PC-9 (cell line): ENCODE measurements at regions of chr7 and their contacts with region 1.

Region 1: DNA sequence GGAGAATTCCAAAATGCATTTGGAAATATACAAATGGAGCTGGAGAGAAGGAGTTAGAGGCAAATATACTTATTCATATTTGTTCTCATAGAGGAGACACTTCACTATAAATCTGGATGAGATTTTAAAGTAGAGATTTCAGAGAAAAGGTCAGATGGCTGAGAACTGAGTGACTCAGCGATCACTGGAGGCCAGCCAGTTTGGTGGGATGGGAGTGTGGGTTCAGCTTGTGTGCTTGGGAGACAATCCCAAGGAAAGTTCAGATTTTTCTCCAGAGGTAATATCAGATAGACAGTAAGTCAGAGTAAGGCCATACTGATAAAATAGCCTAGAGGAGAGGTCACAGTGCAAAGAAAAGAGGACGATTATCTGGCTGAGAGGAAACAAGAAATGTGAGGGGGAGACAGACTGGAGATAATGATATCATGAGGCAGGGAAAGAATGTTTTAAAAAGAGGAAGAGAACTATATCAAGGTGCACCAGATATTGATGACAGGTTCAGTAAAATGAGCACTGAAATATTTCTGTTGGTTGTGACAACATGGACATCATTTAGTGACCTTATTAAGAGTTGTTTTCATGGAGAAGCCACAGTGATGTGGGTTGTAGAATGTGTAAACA is 67.0 kb downstream of the MDFIC start:
- DNase-seq: peak in 1 of 2 experiments; percentile 61
- H3K4me3 ChIP-seq: no peak overlapping the region
- H3K27ac ChIP-seq: peak overlapping the region; percentile 40
- H3K4me1 ChIP-seq: peaks cover 16% of the 10 kb centered on the region
- H3K27me3 ChIP-seq: no peaks in the 10 kb centered on the region
- CTCF ChIP-seq: no peak

Region 2: DNA sequence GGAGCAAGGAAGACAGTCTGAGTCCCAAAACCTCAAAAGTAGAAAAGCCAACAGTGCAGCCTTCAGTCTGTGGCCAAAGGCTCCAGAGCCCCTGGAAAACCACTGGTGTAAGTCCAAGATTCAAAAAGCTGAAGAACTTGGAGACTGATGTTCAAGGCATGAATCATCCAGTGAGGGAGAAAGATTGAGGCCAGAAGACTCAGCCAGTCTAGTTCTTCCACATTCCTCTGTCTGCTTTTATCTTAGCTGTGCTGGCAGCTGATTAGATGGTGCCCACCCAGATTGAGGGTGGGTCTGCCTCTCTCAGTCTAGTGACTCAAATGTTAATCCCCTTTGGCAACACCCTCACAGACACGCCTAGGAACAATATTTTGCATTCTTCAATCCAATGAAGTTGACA is 87.1 kb before region 1 on chr7:
- CTCF ChIA-PET with region 1: no interaction called
- POLR2A ChIA-PET with region 1: no interaction called
- intact Hi-C with region 1: loop called (anchors 5 kb)
- DNase-seq: peak; percentile 79 to 88
- H3K4me3 ChIP-seq: 0 out of 2 replicates have a peak overlapping the region, but pooled peaks have one; percentile 12
- H3K27ac ChIP-seq: peak overlapping the region; percentile 22
- H3K4me1 ChIP-seq: peaks cover 17% of the 10 kb centered on the region
- H3K27me3 ChIP-seq: no peaks in the 10 kb centered on the region
- CTCF ChIP-seq: no peak

Region 3: GRCh38 chr7:114922016-114922651 is 66.7 kb before region 1 on chr7 and contains the start of gene MDFIC:
- CTCF ChIA-PET with region 1: no interaction called
- POLR2A ChIA-PET with region 1: interaction called, 11 read pairs
- intact Hi-C with region 1: loop called (anchors 5 kb)
- DNase-seq: peak in 1 of 2 experiments; percentile 52
- H3K4me3 ChIP-seq: peak within 1 kb of the TSS; percentile 61
- H3K27ac ChIP-seq: peak within 1 kb of the TSS; percentile 55
- H3K4me1 ChIP-seq: peaks cover 28% of the 10 kb centered on the region
- H3K27me3 ChIP-seq: no peaks in the 10 kb centered on the region
- CTCF ChIP-seq: no peak
- total RNA-seq, gene MDFIC: 38.9 and 39.8 TPM in 2 replicates

Region 4: DNA sequence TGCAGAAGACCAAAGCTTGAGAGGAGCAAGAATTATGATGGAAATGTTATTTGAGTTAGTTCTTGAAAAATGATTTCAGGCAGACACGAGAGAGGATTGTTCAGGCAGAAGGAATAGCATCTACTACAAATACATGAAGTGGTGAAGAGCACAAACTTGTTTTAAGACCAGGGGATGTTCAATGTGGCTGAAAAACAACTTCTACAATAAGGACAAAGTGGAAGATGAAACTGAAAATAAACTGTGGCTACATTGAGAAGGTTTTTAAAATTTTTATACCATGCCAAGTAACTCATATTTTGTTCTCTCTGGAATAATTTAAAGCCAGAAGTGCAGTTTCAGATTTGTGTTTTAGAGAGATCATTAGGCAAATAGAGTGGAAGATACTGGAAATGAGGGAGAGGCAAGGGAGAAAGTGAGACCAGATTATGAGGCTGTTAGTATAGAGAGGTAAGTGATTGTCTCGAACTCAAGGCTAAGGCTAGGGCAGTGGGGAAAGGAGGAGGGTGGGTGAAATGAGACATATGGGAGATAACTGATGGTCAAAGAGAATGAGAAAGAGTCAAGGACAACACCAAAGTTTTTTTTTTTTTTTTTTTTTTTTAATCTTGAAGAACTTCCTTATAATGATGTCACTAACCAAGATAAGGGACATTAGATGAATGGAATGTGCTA is 48.4 kb after region 1 on chr7:
- CTCF ChIA-PET with region 1: no interaction called
- POLR2A ChIA-PET with region 1: no interaction called
- intact Hi-C with region 1: loop called (anchors 5 kb)
- DNase-seq: no peak
- H3K4me3 ChIP-seq: no peak overlapping the region
- H3K27ac ChIP-seq: no peak overlapping the region
- H3K4me1 ChIP-seq: 0 out of 2 replicates have a peak, but pooled peaks cover 7% of the 10 kb centered on the region
- H3K27me3 ChIP-seq: no peaks in the 10 kb centered on the region
- CTCF ChIP-seq: no peak

Region 5: DNA sequence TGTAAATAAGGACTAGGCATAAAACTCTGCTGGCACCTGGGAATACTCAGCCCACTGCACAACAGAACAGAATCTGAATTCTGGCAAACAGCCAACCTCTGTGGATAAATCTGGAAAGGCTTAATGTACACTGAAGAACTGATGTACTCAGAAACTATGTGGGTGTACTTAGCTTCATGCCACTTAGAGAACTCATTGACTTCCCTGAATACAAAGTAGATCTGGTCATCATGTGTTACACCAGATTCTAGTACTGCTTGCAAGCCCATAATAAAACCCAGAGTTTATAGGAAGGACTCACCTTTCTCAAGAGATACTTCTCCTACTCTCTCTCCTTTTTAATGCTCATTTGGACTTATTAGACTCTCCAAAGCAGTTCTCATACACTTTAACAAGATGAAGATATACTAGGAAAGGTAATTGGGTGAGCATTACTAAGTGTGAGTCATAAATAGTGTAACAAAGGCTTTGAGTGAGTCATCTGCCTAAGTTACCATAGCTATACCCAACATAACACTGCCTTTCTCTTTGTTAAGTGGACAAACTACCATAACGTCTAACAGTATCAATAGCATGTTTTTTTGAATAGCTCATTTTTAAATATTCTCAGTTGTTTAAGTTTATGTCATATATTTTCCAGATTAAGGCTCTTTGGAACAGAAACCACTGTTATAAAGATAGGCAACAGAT is 242.2 kb after region 1 on chr7:
- CTCF ChIA-PET with region 1: no interaction called
- POLR2A ChIA-PET with region 1: no interaction called
- intact Hi-C with region 1: loop called (anchors 5 kb)
- DNase-seq: peak; percentile 50 to 93
- H3K4me3 ChIP-seq: no peak overlapping the region
- H3K27ac ChIP-seq: peak overlapping the region; percentile 80
- H3K4me1 ChIP-seq: peaks cover 23% of the 10 kb centered on the region
- H3K27me3 ChIP-seq: no peaks in the 10 kb centered on the region
- CTCF ChIP-seq: no peak